Gastrocnemius medialis (tissue), 4 donors: ENCODE measurements at regions of chr6 and their contacts with region 1.

Region 1: GRCh38 chr6:127120787-127121636 is 2.5 kb downstream of the RSPO3 start:
- DNase-seq: peak; percentile 73 to 79
- ATAC-seq: peak; percentile 62 to 85
- H3K4me3 ChIP-seq: peak overlapping the region; percentile 66 to 72 (median 68)
- H3K27ac ChIP-seq: peak overlapping the region; percentile 83 to 94 (median 86)
- H3K4me1 ChIP-seq: peaks cover 41 to 42% of the 10 kb centered on the region in 2 donors
- H3K27me3 ChIP-seq: peaks cover 0 to 9% (median 0%) of the 10 kb centered on the region in 3 donors
- CTCF ChIP-seq: peak; percentile 57 to 85 (median 72)
- POLR2A ChIP-seq: no peak

Region 2: GRCh38 chr6:125986300-125987025 is 1134.5 kb before region 1 on chr6 and contains the start of gene TRMT11:
- in situ Hi-C with region 1: no loop called
- intact Hi-C with region 1: loop called (anchors 5 kb)
- DNase-seq: peak; percentile 73 to 85
- ATAC-seq: peak; percentile 95 to 97
- H3K4me3 ChIP-seq: peak within 1 kb of the TSS; percentile 64 to 96 (median 92)
- H3K27ac ChIP-seq: peak within 1 kb of the TSS; percentile 71 to 82 (median 80)
- H3K4me1 ChIP-seq: peaks cover 3 to 12% of the 10 kb centered on the region in 2 donors
- H3K27me3 ChIP-seq: no peaks in the 10 kb centered on the region
- CTCF ChIP-seq: no peak
- POLR2A ChIP-seq: peak; percentile 44
- total RNA-seq, gene TRMT11: 2.5 to 10.2 (median 6.9) TPM

Region 3: GRCh38 chr6:126361832-126362412 is 759.1 kb before region 1 on chr6:
- in situ Hi-C with region 1: no loop called
- intact Hi-C with region 1: loop called (anchors 1 kb)
- DNase-seq: no peak
- ATAC-seq: no peak
- H3K4me3 ChIP-seq: no peak overlapping the region
- H3K27ac ChIP-seq: no peak overlapping the region
- H3K4me1 ChIP-seq: no peaks in the 10 kb centered on the region
- H3K27me3 ChIP-seq: no peaks in the 10 kb centered on the region
- CTCF ChIP-seq: no peak
- POLR2A ChIP-seq: no peak

Region 4: GRCh38 chr6:126804332-126805064 is 316.5 kb before region 1 on chr6:
- in situ Hi-C with region 1: loop called in 2 of 4 experiments (anchors 25 kb)
- intact Hi-C with region 1: loop called (anchors 1 kb)
- DNase-seq: peak in 1 of 2 donors; percentile 4
- ATAC-seq: peak; percentile 66 to 87
- H3K4me3 ChIP-seq: no peak overlapping the region
- H3K27ac ChIP-seq: no peak overlapping the region
- H3K4me1 ChIP-seq: peaks cover 0 to 3% of the 10 kb centered on the region in 2 donors
- H3K27me3 ChIP-seq: no peaks in the 10 kb centered on the region
- CTCF ChIP-seq: peak; percentile 39 to 79 (median 62)
- POLR2A ChIP-seq: no peak

Region 5: GRCh38 chr6:127342946-127343808 is 222.2 kb after region 1 on chr6 and contains the start of gene ECHDC1:
- in situ Hi-C with region 1: no loop called
- intact Hi-C with region 1: loop called (anchors 5 kb)
- DNase-seq: peak; percentile 26 to 44
- ATAC-seq: peak; percentile 83 to 84
- H3K4me3 ChIP-seq: peak within 1 kb of the TSS; percentile 72 to 91 (median 78)
- H3K27ac ChIP-seq: peak within 1 kb of the TSS; percentile 80 to 88 (median 82)
- H3K4me1 ChIP-seq: peaks cover 13 to 32% of the 10 kb centered on the region in 2 donors
- H3K27me3 ChIP-seq: no peaks in the 10 kb centered on the region
- CTCF ChIP-seq: peak in 2 of 5 experiments; percentile 16 to 18
- POLR2A ChIP-seq: peak; percentile 19 to 33
- total RNA-seq, gene ECHDC1: 31.4 to 45.3 (median 33.6) TPM